Natural killer cell (primary cell): ENCODE measurements at regions of chr6 and their contacts with region 1.

Region 1: GRCh38 chr6:42390228-42390934 is 61.3 kb downstream of the TRERF1 start:
- DNase-seq: peak; percentile 44 to 83
- ATAC-seq: peak; percentile 75 to 83 (median 83)
- H3K4me3 ChIP-seq: peak overlapping the region; percentile 7
- H3K4me3 Mint-ChIP-seq: peak overlapping the region; percentile 80
- H3K27ac ChIP-seq: peak overlapping the region; percentile 89
- H3K27ac Mint-ChIP-seq: peak overlapping the region; percentile 95 to 97
- H3K4me1 ChIP-seq: peaks cover 80% of the 10 kb centered on the region
- H3K4me1 Mint-ChIP-seq: peaks cover 87 to 89% of the 10 kb centered on the region in 2 donors
- H3K27me3 ChIP-seq: no peaks in the 10 kb centered on the region
- H3K27me3 Mint-ChIP-seq: no peaks in the 10 kb centered on the region
- CTCF ChIP-seq: no peak

Region 2: DNA sequence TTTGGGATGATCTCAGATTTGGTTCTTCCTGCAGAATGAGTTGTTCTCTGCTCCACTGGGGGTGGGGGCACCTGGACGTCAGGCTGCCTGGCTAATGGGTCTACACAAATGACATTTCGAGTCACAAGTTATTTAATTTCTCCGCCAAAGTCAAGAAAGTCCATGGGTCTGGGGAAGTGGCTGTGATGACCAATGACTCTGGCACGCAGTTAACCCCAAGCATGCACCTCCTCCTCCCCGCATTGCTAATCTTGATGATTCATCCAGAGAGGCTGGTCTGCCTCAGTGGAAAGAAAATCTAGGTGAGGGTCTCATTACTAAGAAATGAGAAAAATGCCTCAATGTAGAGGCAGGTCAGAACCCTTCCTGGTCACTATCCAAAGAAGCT is 74.4 kb before region 1 on chr6:
- intact Hi-C with region 1: no loop called
- DNase-seq: no peak
- ATAC-seq: peak in 1 of 3 donors; percentile 28
- H3K4me3 ChIP-seq: no peak overlapping the region
- H3K4me3 Mint-ChIP-seq: no peak overlapping the region
- H3K27ac ChIP-seq: no peak overlapping the region
- H3K27ac Mint-ChIP-seq: peak overlapping the region in 1 of 2 donors; percentile 70
- H3K4me1 ChIP-seq: peaks cover 24% of the 10 kb centered on the region
- H3K4me1 Mint-ChIP-seq: peaks cover 40 to 42% of the 10 kb centered on the region in 2 donors
- H3K27me3 ChIP-seq: no peaks in the 10 kb centered on the region
- H3K27me3 Mint-ChIP-seq: no peaks in the 10 kb centered on the region
- CTCF ChIP-seq: no peak

Region 3: GRCh38 chr6:42338663-42339218 is 51.6 kb before region 1 on chr6:
- intact Hi-C with region 1: no loop called
- DNase-seq: no peak
- ATAC-seq: no peak
- H3K4me3 ChIP-seq: no peak overlapping the region
- H3K4me3 Mint-ChIP-seq: no peak overlapping the region
- H3K27ac ChIP-seq: no peak overlapping the region
- H3K27ac Mint-ChIP-seq: no peak overlapping the region
- H3K4me1 ChIP-seq: peaks cover 6% of the 10 kb centered on the region
- H3K4me1 Mint-ChIP-seq: peaks cover 23 to 58% of the 10 kb centered on the region in 2 donors
- H3K27me3 ChIP-seq: no peaks in the 10 kb centered on the region
- H3K27me3 Mint-ChIP-seq: no peaks in the 10 kb centered on the region
- CTCF ChIP-seq: no peak

Region 4: GRCh38 chr6:42367353-42368011 is 22.9 kb before region 1 on chr6:
- intact Hi-C with region 1: loop called (anchors 2 kb)
- DNase-seq: peak; percentile 19 to 63
- ATAC-seq: peak; percentile 56 to 74 (median 61)
- H3K4me3 ChIP-seq: no peak overlapping the region
- H3K4me3 Mint-ChIP-seq: peak overlapping the region; percentile 81
- H3K27ac ChIP-seq: peak overlapping the region; percentile 80
- H3K27ac Mint-ChIP-seq: peak overlapping the region; percentile 90
- H3K4me1 ChIP-seq: peaks cover 73% of the 10 kb centered on the region
- H3K4me1 Mint-ChIP-seq: peaks cover 67 to 81% of the 10 kb centered on the region in 2 donors
- H3K27me3 ChIP-seq: no peaks in the 10 kb centered on the region
- H3K27me3 Mint-ChIP-seq: no peaks in the 10 kb centered on the region
- CTCF ChIP-seq: no peak

Region 5: GRCh38 chr6:42402184-42402583 is 11.8 kb after region 1 on chr6:
- intact Hi-C with region 1: no loop called
- DNase-seq: peak in 1 of 2 donors; percentile 50
- ATAC-seq: peak; percentile 43 to 68 (median 52)
- H3K4me3 ChIP-seq: no peak overlapping the region
- H3K4me3 Mint-ChIP-seq: peak overlapping the region; percentile 17
- H3K27ac ChIP-seq: no peak overlapping the region
- H3K27ac Mint-ChIP-seq: peak overlapping the region; percentile 62 to 91
- H3K4me1 ChIP-seq: peaks cover 40% of the 10 kb centered on the region
- H3K4me1 Mint-ChIP-seq: peaks cover 73 to 76% of the 10 kb centered on the region in 2 donors
- H3K27me3 ChIP-seq: no peaks in the 10 kb centered on the region
- H3K27me3 Mint-ChIP-seq: no peaks in the 10 kb centered on the region
- CTCF ChIP-seq: no peak

Region 6: GRCh38 chr6:42417641-42418112 is 27.3 kb after region 1 on chr6:
- intact Hi-C with region 1: loop called (anchors 1 kb)
- DNase-seq: peak; percentile 52 to 79
- ATAC-seq: peak; percentile 89 to 94 (median 90)
- H3K4me3 ChIP-seq: no peak overlapping the region
- H3K4me3 Mint-ChIP-seq: peak overlapping the region; percentile 68
- H3K27ac ChIP-seq: no peak overlapping the region
- H3K27ac Mint-ChIP-seq: peak overlapping the region; percentile 69 to 80
- H3K4me1 ChIP-seq: peaks cover 20% of the 10 kb centered on the region
- H3K4me1 Mint-ChIP-seq: peaks cover 40 to 58% of the 10 kb centered on the region in 2 donors
- H3K27me3 ChIP-seq: no peaks in the 10 kb centered on the region
- H3K27me3 Mint-ChIP-seq: no peaks in the 10 kb centered on the region
- CTCF ChIP-seq: no peak

Region 7: DNA sequence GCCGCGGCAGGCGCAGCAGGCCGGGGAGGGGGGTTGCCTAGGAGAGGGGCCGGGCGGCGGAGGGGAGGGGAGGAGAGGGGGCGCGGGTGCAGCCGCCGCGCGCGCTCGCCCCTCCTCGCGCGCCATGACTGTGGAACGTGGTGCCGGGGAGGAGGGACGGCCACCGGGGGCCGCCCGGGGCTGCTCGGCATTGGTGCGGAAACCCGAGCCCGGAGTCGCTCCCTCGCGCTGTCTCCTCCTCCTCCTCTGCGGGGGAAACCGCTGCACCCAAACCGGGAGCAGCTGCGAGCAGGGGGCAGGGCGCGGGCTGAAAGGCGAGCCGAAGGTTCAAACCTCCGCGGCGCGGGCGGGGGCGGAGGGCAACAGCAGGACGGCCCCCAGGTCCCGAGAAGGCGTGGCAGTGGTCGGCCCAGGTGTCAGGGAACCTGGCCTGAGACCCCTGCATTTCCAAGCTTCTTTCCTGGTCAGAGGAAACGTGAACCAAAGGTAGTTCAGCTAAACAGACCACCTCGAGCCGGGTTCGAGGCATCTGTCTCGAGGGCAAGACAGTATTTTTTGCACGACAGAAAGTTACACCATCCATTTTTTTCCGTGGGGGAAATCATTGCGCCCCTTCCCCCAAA is 62.8 kb after region 1 on chr6:
- intact Hi-C with region 1: loop called (anchors 2 kb)
- DNase-seq: peak; percentile 53 to 88
- ATAC-seq: peak; percentile 61 to 75 (median 74)
- H3K4me3 ChIP-seq: peak overlapping the region; percentile 65
- H3K4me3 Mint-ChIP-seq: peak overlapping the region; percentile 99
- H3K27ac ChIP-seq: no peak overlapping the region
- H3K27ac Mint-ChIP-seq: peak overlapping the region; percentile 57 to 96
- H3K4me1 ChIP-seq: peaks cover 32% of the 10 kb centered on the region
- H3K4me1 Mint-ChIP-seq: peaks cover 38 to 45% of the 10 kb centered on the region in 2 donors
- H3K27me3 ChIP-seq: no peaks in the 10 kb centered on the region
- H3K27me3 Mint-ChIP-seq: no peaks in the 10 kb centered on the region
- CTCF ChIP-seq: no peak